Activated CD4-positive, alpha-beta memory T cell treated with anti-CD3 and anti-CD28 coated beads for 36 hours (primary cell): ENCODE measurements at regions of chr11 and their contacts with region 1.

Region 1: DNA sequence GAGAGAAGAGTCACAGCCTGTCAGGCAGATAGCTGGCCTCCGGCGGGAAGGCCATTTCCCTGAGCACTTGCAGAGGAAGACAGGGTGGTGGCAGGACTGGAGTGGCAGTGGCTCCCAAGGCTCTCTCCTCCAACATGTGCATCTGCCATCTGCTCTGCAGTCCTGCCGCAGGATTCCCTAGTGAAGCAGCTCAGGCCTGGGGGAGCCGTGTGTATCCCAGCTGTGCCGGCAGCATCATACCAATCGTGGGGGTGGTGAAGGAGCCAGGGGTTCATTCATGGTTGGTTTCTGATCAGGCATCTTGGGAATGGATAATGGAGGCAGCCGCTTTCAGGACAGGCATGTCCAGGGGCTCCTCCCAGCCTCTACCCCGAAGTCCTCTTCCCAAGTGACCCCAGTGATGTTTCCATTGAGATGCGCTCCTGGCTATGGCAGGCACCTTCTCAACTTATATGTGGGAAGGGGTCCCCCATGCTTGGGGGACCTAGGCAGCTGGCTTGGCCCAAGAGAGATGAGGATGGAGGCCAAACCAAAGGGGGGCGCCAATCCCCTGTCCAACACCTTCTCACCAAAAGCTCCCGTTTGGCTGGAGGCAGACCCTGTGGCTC is 6.1 kb downstream of the TAGLN start:
- DNase-seq: no peak
- H3K4me3 Mint-ChIP-seq: no peak overlapping the region
- H3K27ac Mint-ChIP-seq: no peak overlapping the region
- H3K4me1 Mint-ChIP-seq: no peaks in the 10 kb centered on the region
- H3K27me3 Mint-ChIP-seq: no peaks in the 10 kb centered on the region

Region 2: DNA sequence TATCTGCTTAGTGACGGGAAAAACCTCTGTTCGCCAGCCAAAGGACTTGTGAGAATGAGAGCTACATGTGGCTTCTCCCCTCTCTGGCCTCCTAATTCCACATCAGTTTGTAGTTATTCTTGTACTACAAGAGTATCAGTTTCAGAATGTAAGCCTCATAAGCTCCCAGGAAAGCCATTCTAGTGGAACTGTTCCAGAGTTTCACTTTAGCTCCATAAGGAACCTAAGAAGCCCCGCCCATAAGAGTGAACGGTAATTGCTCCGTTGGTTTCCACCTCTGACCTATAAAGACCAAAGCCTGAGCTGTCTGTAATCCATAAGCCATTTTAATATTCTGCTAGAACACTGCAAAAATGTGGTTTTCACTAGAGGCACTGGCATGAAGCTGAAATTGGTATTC is 160.1 kb before region 1 on chr11:
- CTCF ChIA-PET with region 1: no interaction called
- POLR2A ChIA-PET with region 1: no interaction called
- intact Hi-C with region 1: no loop called
- DNase-seq: no peak
- H3K4me3 Mint-ChIP-seq: no peak overlapping the region
- H3K27ac Mint-ChIP-seq: no peak overlapping the region
- H3K4me1 Mint-ChIP-seq: peaks cover 59% of the 10 kb centered on the region
- H3K27me3 Mint-ChIP-seq: no peaks in the 10 kb centered on the region

Region 3: DNA sequence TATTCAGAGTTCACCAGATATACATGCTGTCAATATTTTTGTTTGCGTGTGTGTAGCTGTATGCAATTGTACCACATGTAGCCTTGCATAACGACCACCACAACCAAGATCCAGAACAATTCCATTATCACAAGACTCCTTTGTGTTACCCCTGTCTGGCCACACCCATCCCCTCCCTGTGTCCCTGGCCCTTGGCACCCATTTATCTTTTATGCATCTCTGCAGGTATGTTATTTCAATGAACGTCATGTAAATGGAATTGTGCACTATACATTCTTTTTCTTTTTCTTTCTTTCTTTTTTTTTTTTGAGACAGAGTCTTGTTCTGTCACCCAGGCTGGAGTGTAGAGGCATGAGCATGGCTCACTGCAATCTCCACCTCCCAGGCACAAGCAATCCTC is 70.9 kb before region 1 on chr11:
- CTCF ChIA-PET with region 1: no interaction called
- POLR2A ChIA-PET with region 1: no interaction called
- intact Hi-C with region 1: loop called (anchors 5 kb)
- DNase-seq: no peak
- H3K4me3 Mint-ChIP-seq: no peak overlapping the region
- H3K27ac Mint-ChIP-seq: no peak overlapping the region
- H3K4me1 Mint-ChIP-seq: no peaks in the 10 kb centered on the region
- H3K27me3 Mint-ChIP-seq: no peaks in the 10 kb centered on the region

Region 4: DNA sequence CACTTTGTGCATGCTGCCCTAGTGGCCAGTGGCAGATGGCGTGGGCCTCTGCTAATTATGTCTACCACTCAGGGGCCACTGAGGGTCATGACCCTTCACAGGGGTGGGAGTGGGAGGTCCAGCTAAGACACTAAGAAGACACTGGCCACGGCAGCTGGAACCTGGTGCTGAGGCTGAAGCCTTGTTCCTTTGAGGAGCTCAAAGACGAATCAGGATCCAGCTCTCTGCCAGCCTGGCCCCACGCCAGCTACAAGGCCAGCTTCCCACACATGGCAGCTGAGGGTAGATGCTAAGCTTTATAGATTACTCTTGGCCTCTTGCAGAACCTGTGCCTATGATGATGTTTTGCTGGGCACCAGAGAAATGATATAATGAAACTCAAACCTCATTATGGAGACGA is 365.4 kb after region 1 on chr11:
- CTCF ChIA-PET with region 1: no interaction called
- POLR2A ChIA-PET with region 1: no interaction called
- intact Hi-C with region 1: no loop called
- DNase-seq: no peak
- H3K4me3 Mint-ChIP-seq: no peak overlapping the region
- H3K27ac Mint-ChIP-seq: no peak overlapping the region
- H3K4me1 Mint-ChIP-seq: no peaks in the 10 kb centered on the region
- H3K27me3 Mint-ChIP-seq: peaks cover 1% of the 10 kb centered on the region